ENCODE measurements at regions of chr6 and their contacts with region 1.

Region 1: DNA sequence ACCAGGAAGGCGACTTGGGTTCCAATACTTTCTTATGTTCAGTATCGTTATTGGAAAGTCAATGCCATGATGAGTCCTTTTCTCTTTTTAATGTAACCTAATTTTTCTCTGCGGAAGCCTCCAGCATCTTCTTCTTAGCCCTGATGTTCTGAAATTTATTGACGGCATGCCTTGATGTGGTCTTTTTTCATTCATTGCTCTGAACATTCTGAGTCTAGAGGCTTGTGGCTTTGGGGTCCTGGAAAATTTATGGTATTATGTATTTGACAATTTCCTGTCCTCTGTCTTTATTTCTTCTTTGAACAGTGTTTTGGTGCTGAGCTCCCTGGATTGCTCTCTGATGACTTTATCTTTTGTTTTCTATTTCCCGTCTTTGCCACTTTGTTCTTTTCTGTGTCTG is 28.7 kb upstream of the MAS1 start:
- DNase-seq: no peak
- H3K4me3 Mint-ChIP-seq: no peak overlapping the region
- H3K27ac Mint-ChIP-seq: no peak overlapping the region
- H3K4me1 Mint-ChIP-seq: peaks cover 16% of the 10 kb centered on the region
- H3K27me3 Mint-ChIP-seq: peaks cover 7% of the 10 kb centered on the region

Region 2: GRCh38 chr6:159842035-159842434 is 20.1 kb before region 1 on chr6:
- CTCF ChIA-PET with region 1: no interaction called
- POLR2A ChIA-PET with region 1: no interaction called
- intact Hi-C with region 1: no loop called
- DNase-seq: no peak
- H3K4me3 Mint-ChIP-seq: no peak overlapping the region
- H3K27ac Mint-ChIP-seq: no peak overlapping the region
- H3K4me1 Mint-ChIP-seq: no peaks in the 10 kb centered on the region
- H3K27me3 Mint-ChIP-seq: no peaks in the 10 kb centered on the region

Region 3: DNA sequence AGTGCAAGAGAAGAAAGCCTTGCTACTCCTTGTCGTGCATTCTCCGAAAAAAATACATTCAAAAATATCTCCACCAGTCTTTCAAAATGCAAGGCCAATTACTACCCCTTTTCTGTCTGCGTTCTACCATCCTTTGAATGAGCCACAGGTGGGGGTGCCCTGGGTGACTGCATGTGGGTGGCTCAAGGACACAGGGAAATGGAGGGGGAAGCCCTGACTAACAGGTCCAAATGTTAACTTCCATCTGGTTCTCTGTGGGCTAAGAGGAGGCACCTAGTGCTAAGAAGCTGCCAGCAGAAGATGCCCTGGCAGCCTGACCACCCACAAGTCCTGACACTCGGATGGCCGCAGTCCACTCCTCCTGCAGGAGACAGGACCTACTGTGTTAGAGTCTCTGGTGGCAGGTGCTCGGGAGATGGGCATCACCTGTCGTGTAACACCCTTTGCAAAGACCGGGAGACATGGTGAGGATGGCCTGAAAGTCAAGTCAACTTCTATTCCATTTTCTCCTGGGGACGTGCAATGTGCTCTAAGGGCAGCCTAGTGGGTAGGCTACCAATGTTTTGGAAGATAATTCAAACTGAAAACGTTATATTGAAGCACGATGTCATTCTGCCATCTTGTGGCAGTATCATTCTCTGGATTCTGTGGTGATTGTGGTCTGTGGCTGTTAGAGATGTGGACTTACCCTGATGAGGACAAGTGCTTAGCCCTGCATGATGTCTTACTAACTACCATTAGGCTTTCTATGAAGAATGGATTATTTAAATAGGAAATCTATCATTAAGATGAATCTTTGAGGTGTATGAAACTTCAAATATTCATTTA is 79.4 kb after region 1 on chr6:
- CTCF ChIA-PET with region 1: interaction called, 36 read pairs
- POLR2A ChIA-PET with region 1: no interaction called
- intact Hi-C with region 1: loop called (anchors 1 kb)
- DNase-seq: peak; percentile 49
- H3K4me3 Mint-ChIP-seq: no peak overlapping the region
- H3K27ac Mint-ChIP-seq: no peak overlapping the region
- H3K4me1 Mint-ChIP-seq: peaks cover 3% of the 10 kb centered on the region
- H3K27me3 Mint-ChIP-seq: peaks cover 8% of the 10 kb centered on the region

Region 4: GRCh38 chr6:160102956-160103824 is 241.1 kb after region 1 on chr6:
- CTCF ChIA-PET with region 1: no interaction called
- POLR2A ChIA-PET with region 1: no interaction called
- intact Hi-C with region 1: loop called (anchors 2 kb)
- DNase-seq: peak; percentile 25
- H3K4me3 Mint-ChIP-seq: no peak overlapping the region
- H3K27ac Mint-ChIP-seq: no peak overlapping the region
- H3K4me1 Mint-ChIP-seq: peaks cover 14% of the 10 kb centered on the region
- H3K27me3 Mint-ChIP-seq: no peaks in the 10 kb centered on the region

Region 5: GRCh38 chr6:160455541-160456213 is 593.6 kb after region 1 on chr6:
- CTCF ChIA-PET with region 1: interaction called, 6 read pairs
- POLR2A ChIA-PET with region 1: no interaction called
- intact Hi-C with region 1: loop called (anchors 1 kb)
- DNase-seq: peak; percentile 78
- H3K4me3 Mint-ChIP-seq: no peak overlapping the region
- H3K27ac Mint-ChIP-seq: no peak overlapping the region
- H3K4me1 Mint-ChIP-seq: peaks cover 28% of the 10 kb centered on the region
- H3K27me3 Mint-ChIP-seq: peaks cover 7% of the 10 kb centered on the region

Region 6: DNA sequence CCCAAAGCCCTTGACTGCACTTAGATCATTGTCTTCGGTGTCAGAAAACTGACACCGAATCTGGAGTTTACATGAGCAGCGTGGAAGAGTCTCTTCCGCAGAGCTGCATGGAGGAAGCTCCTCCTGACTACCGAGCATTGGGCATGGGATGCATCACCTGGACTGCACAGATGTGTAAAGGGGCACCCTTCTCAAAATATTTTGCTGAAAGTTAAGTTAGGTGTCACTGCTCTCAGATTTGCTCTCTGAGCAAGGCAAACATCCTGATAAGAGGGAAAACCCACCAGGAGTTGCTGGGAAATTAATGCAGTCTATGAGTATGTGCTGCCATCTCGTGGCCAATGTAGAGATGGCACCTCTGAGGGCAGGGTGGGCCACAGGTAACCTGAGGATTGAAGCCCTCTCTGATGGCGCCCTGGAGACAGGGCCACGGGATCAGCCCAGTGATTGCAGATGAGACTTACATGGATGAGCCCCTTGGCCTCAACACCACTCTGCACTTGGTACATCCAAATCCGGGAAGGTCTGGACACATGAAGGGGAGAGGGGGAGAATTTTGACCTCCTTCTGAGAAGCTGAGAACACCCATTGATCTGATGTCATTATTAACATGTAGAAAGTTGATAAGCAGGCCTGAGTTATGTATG is 672.1 kb after region 1 on chr6:
- CTCF ChIA-PET with region 1: interaction called, 3 read pairs
- POLR2A ChIA-PET with region 1: no interaction called
- intact Hi-C with region 1: loop called (anchors 10 kb)
- DNase-seq: peak; percentile 69
- H3K4me3 Mint-ChIP-seq: no peak overlapping the region
- H3K27ac Mint-ChIP-seq: no peak overlapping the region
- H3K4me1 Mint-ChIP-seq: no peaks in the 10 kb centered on the region
- H3K27me3 Mint-ChIP-seq: no peaks in the 10 kb centered on the region

Region 7: DNA sequence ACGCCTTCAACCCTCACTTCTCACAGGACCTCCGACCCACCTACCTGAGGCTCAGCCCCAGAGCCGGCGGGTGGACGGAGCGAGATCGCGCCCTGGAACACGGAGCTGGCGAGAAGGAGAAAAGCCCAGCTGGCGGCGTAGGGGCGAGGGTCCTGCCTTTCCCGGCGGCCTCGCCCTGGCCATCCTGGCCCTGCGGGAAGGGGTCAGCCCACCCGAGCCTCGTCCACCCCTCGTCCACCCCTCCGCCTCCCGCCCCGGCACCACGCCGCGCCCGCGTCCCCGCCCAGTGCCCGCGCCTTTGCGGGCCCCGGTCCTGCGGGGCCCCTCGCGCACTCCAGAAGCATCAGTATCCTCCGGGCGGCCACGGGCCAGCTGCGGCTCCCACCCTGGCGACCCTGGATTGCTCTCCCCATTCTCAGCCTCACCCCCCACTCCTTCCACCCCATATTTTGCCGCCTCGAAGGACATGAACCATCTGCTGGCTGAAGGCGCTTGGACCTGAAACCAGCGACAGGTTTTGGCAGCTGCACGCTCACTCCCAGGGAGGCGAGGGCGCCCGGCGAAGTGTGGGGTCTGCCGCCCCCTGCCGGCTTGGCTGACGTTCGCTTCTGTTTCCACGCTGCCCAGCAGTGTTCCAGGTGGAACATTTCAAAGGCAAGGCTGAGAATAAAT is 905.0 kb after region 1 on chr6:
- CTCF ChIA-PET with region 1: no interaction called
- POLR2A ChIA-PET with region 1: no interaction called
- intact Hi-C with region 1: no loop called
- DNase-seq: peak; percentile 69
- H3K4me3 Mint-ChIP-seq: peak overlapping the region; percentile 63
- H3K27ac Mint-ChIP-seq: no peak overlapping the region
- H3K4me1 Mint-ChIP-seq: peaks cover 8% of the 10 kb centered on the region
- H3K27me3 Mint-ChIP-seq: peaks cover 21% of the 10 kb centered on the region

Measured in activated CD4-positive, alpha-beta memory T cell treated with anti-CD3 and anti-CD28 coated beads for 36 hours (primary cell).